A673 (cell line): ENCODE measurements at regions of chr2 and their contacts with region 1.

Region 1: GRCh38 chr2:177332041-177332991 is 60.3 kb upstream of the AGPS start:
- DNase-seq: peak; percentile 83
- H3K4me3 ChIP-seq: no peak overlapping the region
- H3K27ac ChIP-seq: peak overlapping the region; percentile 6
- H3K4me1 ChIP-seq: peaks cover 18% of the 10 kb centered on the region
- H3K27me3 ChIP-seq: no peaks in the 10 kb centered on the region
- CTCF ChIP-seq: peak; percentile 81

Region 2: DNA sequence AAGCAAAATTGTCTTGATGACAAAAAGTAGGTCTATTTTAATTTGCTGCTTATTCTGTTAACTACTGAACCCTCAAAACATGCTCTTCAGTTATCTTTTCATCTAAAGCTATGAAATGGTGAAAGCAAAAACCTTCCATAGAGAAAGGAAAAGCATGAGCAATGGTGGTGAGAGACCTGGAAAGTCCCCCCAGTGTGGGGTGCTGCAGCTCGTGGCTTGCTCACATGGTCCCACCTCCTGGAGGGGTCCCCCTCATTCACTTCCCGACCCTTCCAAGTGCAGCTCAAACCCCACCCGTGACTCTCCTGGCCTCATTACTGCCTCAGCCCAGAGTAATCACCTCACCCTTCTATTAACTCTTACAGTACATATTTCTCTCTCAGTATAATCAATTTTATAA is 421.5 kb before region 1 on chr2:
- CTCF ChIA-PET with region 1: no interaction called
- POLR2A ChIA-PET with region 1: no interaction called
- intact Hi-C with region 1: no loop called
- DNase-seq: no peak
- H3K4me3 ChIP-seq: no peak overlapping the region
- H3K27ac ChIP-seq: no peak overlapping the region
- H3K4me1 ChIP-seq: no peaks in the 10 kb centered on the region
- H3K27me3 ChIP-seq: no peaks in the 10 kb centered on the region
- CTCF ChIP-seq: no peak

Region 3: DNA sequence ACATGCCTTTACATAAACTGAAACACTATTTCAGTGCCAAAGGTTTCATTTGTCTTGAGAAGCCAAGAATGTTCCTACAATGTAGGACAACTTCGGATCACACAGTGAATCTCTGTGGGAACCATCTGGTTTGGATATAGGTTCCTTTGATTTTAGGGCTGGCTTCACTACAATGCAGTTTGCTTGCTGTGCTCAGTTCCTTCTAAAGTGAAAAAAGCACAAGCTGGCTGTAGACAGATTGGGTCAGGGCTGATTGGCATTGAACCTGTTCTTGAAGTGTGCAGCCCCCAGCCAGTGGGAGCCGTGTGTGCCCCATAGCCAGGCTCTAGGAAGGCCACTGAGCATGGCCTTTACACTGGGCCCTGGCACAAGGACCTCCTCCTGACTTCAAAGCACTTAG is 287.6 kb before region 1 on chr2:
- CTCF ChIA-PET with region 1: no interaction called
- POLR2A ChIA-PET with region 1: no interaction called
- intact Hi-C with region 1: no loop called
- DNase-seq: no peak
- H3K4me3 ChIP-seq: no peak overlapping the region
- H3K27ac ChIP-seq: no peak overlapping the region
- H3K4me1 ChIP-seq: peaks cover 9% of the 10 kb centered on the region
- H3K27me3 ChIP-seq: no peaks in the 10 kb centered on the region
- CTCF ChIP-seq: no peak

Region 4: DNA sequence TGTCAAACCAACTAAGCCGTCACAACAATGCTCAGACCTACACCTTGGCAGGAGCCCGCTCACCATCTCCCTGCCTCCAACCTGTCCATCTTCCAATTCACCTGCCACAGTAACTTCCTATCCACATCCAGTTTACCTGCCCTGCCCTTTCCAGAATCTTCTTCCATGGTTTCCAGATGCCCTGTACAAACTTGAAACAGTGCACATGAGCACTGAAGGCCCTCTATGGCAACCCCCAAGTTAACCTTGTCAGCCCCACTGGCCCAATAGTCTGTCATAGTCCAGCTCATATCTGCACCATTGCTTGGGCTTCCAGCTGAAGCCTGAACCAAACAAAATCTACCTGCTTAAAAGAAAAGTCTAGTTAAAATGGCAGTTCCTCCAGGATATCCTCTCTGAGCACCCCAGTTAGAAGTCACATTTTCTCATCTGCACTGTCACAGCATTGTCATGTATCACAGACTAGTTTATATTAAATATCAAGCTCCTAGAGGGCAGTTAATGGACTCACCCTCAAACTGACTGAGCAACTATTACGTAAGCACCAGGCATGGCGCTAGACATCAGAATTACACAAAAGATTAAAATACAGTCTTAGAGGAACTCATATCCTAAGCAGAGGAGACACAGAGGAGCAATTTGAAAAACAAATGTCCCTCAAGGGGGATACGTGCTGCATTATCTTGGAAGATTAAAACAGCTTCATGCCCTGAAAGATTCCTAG is 79.3 kb before region 1 on chr2:
- CTCF ChIA-PET with region 1: no interaction called
- POLR2A ChIA-PET with region 1: no interaction called
- intact Hi-C with region 1: no loop called
- DNase-seq: no peak
- H3K4me3 ChIP-seq: no peak overlapping the region
- H3K27ac ChIP-seq: peak overlapping the region; percentile 57
- H3K4me1 ChIP-seq: peaks cover 29% of the 10 kb centered on the region
- H3K27me3 ChIP-seq: no peaks in the 10 kb centered on the region
- CTCF ChIP-seq: no peak

Region 5: DNA sequence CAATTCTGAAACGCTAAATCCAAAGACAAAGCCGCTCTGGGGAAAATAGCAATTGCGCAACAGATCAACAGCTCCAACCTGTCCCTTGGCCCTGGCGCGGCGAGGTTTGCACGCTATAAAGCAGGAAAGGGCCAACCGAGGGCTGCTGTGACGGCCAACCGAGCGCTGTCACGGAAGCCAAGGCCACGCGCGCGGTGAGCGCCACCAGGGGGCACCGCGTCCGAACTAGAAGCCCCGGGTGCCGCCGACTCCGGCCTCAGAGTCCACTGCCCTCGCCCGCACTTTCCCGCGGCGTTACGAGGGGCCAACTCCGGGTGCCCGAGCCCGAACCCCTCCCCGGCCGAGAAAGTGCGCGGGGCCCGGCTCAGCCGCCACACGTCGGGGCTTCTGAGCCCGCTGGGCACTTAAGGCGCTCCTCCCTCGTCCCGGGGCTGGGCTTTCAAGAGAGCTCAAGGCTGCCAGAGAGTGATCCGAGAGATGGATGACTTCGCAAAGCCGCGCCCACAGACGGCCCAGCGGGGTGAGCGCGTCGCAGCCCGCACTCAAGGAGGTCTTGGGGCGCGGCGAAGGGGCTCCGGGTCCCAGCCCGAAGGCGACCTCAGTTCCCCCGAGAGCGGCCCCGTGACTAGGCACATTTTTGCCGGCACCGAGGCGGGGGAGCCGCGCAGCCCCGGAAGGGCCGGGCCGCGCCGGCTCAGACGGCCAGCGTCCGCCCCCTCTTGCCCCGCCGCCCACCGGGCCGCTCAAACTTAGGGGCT is 68.7 kb before region 1 on chr2:
- CTCF ChIA-PET with region 1: no interaction called
- POLR2A ChIA-PET with region 1: interaction called, 4 read pairs
- intact Hi-C with region 1: loop called (anchors 5 kb)
- DNase-seq: peak; percentile 98
- H3K4me3 ChIP-seq: peak overlapping the region; percentile 94
- H3K27ac ChIP-seq: peak overlapping the region; percentile 99
- H3K4me1 ChIP-seq: peaks cover 30% of the 10 kb centered on the region
- H3K27me3 ChIP-seq: no peaks in the 10 kb centered on the region
- CTCF ChIP-seq: peak; percentile 89

Region 6: DNA sequence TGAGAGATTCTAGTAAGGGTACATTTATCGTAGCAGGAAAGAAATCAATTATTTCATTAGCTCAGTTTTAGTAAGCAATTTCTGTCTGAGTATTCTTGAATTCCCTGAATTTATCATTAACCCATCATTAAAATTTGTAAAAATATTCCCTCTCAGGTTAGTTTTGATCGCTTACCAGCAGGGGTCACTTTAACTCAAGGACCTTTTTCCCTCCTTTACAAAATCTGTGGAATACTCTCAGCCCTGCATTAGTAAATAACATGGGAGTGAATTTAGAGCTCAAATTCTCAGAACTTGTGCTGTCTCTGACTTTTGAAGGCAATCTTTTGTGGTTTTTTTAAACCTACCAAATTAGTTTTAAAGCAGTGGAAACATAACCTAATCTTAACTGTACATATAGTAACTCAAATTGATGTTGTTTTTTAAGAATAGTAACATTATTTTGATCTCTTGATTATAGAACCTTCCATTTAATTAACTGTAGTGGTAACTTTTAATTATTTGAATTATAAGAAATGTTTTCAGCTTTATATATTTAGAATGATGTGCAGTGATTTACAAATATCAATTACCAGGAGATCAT is 157.5 kb after region 1 on chr2:
- CTCF ChIA-PET with region 1: no interaction called
- POLR2A ChIA-PET with region 1: no interaction called
- intact Hi-C with region 1: loop called (anchors 5 kb)
- DNase-seq: peak; percentile 66
- H3K4me3 ChIP-seq: no peak overlapping the region
- H3K27ac ChIP-seq: no peak overlapping the region
- H3K4me1 ChIP-seq: peaks cover 14% of the 10 kb centered on the region
- H3K27me3 ChIP-seq: no peaks in the 10 kb centered on the region
- CTCF ChIP-seq: peak; percentile 73

Region 7: GRCh38 chr2:177724398-177725287 is 392.3 kb after region 1 on chr2:
- CTCF ChIA-PET with region 1: interaction called, 11 read pairs
- POLR2A ChIA-PET with region 1: no interaction called
- intact Hi-C with region 1: loop called (anchors 1 kb)
- DNase-seq: peak; percentile 72
- H3K4me3 ChIP-seq: no peak overlapping the region
- H3K27ac ChIP-seq: no peak overlapping the region
- H3K4me1 ChIP-seq: no peaks in the 10 kb centered on the region
- H3K27me3 ChIP-seq: no peaks in the 10 kb centered on the region
- CTCF ChIP-seq: peak; percentile 95